CD8-positive, alpha-beta T cell (primary cell): ENCODE measurements at regions of chr7 and their contacts with region 1.

Region 1: GRCh38 chr7:5557920-5558401 is 134.3 kb upstream of the TNRC18 start:
- DNase-seq: peak in 2 of 9 experiments; percentile 33 to 60
- ATAC-seq: no peak
- H3K4me3 ChIP-seq: peak overlapping the region; percentile 10 to 40
- H3K4me3 Mint-ChIP-seq: peak overlapping the region; percentile 84
- H3K27ac ChIP-seq: peak overlapping the region; percentile 19 to 74
- H3K27ac Mint-ChIP-seq: peak overlapping the region; percentile 93
- H3K4me1 ChIP-seq: peaks cover 47% of the 10 kb centered on the region
- H3K4me1 Mint-ChIP-seq: peaks cover 48% of the 10 kb centered on the region
- H3K27me3 ChIP-seq: peaks cover 0 to 9% of the 10 kb centered on the region in 2 experiments
- H3K27me3 Mint-ChIP-seq: peaks cover 2% of the 10 kb centered on the region
- CTCF ChIP-seq: no peak

Region 2: DNA sequence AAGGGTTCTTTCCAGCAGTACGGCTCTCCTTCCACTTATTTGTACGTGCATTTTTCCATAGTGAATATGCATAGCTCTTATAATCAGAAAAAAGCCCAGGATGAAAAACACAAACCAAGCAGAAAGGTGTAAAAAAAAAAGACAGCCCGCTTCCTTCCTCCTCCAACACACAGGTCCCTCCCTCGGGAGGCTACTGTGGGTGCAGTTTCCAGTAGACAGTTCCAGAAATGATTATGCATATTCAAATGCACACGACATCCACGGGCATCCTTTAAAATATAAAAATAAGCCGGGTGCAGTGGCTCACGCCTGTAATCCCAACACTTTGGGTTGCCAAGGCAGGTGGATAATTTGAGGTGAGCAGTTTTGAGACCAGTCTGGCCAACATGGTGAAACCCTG is 194.2 kb before region 1 on chr7:
- CTCF ChIA-PET with region 1: no interaction called
- POLR2A ChIA-PET with region 1: no interaction called
- intact Hi-C with region 1: loop called in 1 of 2 experiments (anchors 2 kb)
- DNase-seq: no peak
- ATAC-seq: no peak
- H3K4me3 ChIP-seq: no peak overlapping the region
- H3K4me3 Mint-ChIP-seq: no peak overlapping the region
- H3K27ac ChIP-seq: no peak overlapping the region
- H3K27ac Mint-ChIP-seq: no peak overlapping the region
- H3K4me1 ChIP-seq: no peaks in the 10 kb centered on the region
- H3K4me1 Mint-ChIP-seq: peaks cover 20% of the 10 kb centered on the region
- H3K27me3 ChIP-seq: no peaks in the 10 kb centered on the region
- H3K27me3 Mint-ChIP-seq: no peaks in the 10 kb centered on the region
- CTCF ChIP-seq: no peak

Region 3: GRCh38 chr7:5396999-5397663 is 160.8 kb before region 1 on chr7:
- CTCF ChIA-PET with region 1: interaction called, 3 read pairs
- POLR2A ChIA-PET with region 1: no interaction called
- intact Hi-C with region 1: loop called in 1 of 2 experiments (anchors 2 kb)
- DNase-seq: peak; percentile 81 to 99 (median 92)
- ATAC-seq: peak; percentile 91
- H3K4me3 ChIP-seq: peak overlapping the region; percentile 83 to 96
- H3K4me3 Mint-ChIP-seq: peak overlapping the region; percentile 82
- H3K27ac ChIP-seq: peak overlapping the region; percentile 84 to 95
- H3K27ac Mint-ChIP-seq: peak overlapping the region; percentile 81
- H3K4me1 ChIP-seq: peaks cover 31% of the 10 kb centered on the region
- H3K4me1 Mint-ChIP-seq: peaks cover 26% of the 10 kb centered on the region
- H3K27me3 ChIP-seq: no peaks in the 10 kb centered on the region
- H3K27me3 Mint-ChIP-seq: no peaks in the 10 kb centered on the region
- CTCF ChIP-seq: no peak

Region 4: DNA sequence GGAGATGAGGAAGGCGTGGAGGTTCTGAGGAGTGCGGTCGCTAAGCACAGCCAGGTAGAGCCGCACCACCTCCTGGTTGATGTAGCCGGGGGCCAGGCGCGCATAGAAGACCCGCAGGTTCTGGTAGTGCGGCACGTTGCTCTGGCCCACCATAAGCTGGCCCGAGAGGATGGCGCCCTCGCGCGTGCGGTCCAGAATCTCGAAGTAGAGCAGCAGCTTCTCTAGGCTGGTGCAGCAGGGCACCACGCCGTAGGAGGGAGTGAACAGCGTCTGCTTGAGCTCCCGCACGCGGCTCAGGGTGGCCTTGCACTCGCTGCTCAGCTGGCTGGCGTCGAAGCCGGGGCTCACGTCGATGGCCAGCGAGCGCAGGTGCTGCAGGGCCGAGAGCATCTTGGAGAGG is 56.5 kb before region 1 on chr7:
- CTCF ChIA-PET with region 1: interaction called, 12 read pairs
- POLR2A ChIA-PET with region 1: interaction called, 5 read pairs
- intact Hi-C with region 1: no loop called
- DNase-seq: no peak
- ATAC-seq: no peak
- H3K4me3 ChIP-seq: no peak overlapping the region
- H3K4me3 Mint-ChIP-seq: no peak overlapping the region
- H3K27ac ChIP-seq: no peak overlapping the region
- H3K27ac Mint-ChIP-seq: no peak overlapping the region
- H3K4me1 ChIP-seq: peaks cover 11% of the 10 kb centered on the region
- H3K4me1 Mint-ChIP-seq: peaks cover 10% of the 10 kb centered on the region
- H3K27me3 ChIP-seq: no peaks in the 10 kb centered on the region
- H3K27me3 Mint-ChIP-seq: no peaks in the 10 kb centered on the region
- CTCF ChIP-seq: no peak

Region 5: DNA sequence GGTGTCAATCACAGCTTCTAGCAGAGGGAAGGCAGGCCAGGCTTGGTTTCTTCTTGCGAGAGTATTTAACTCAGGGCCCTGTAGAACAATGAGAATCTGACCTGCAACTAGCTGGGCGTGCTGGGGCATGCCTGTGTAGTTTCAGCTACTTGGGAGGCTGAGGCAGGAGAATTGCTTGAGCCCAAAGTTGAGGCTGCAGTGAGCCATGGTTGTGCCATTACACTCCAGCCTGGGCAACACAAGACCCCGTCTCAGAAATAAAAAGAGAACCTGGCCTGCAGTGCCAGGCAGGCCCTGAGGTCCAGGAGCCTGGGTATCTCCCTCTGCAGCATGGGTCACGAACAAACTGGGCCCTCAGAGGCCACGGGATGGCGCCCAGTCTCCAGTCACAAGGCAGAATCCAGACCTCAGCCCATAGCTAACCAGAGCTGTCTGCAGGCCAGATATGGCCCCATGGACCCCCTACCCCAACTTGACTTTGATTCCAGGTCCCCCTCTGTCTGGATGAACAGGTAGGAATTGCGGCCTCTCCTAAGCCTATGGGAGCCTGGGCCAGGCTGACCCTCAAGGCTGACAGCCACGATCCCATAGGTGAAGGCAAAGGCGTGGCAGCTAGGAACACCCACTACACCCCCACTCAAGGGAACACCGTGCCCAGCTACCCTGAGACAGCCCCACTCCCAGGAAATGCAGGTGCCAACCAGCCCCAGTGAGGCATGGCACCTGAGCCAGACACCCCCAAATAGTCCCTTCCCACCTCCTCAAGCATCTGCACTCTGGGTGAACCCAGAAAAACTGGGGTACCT is 31.7 kb before region 1 on chr7:
- CTCF ChIA-PET with region 1: interaction called, 32 read pairs
- POLR2A ChIA-PET with region 1: no interaction called
- intact Hi-C with region 1: no loop called
- DNase-seq: peak in 5 of 9 experiments; percentile 20 to 68 (median 38)
- ATAC-seq: no peak
- H3K4me3 ChIP-seq: peak overlapping the region; percentile 69 to 87
- H3K4me3 Mint-ChIP-seq: peak overlapping the region; percentile 98
- H3K27ac ChIP-seq: peak overlapping the region in 1 of 2 experiments; percentile 78
- H3K27ac Mint-ChIP-seq: peak overlapping the region; percentile 96
- H3K4me1 ChIP-seq: peaks cover 18% of the 10 kb centered on the region
- H3K4me1 Mint-ChIP-seq: peaks cover 37% of the 10 kb centered on the region
- H3K27me3 ChIP-seq: no peaks in the 10 kb centered on the region
- H3K27me3 Mint-ChIP-seq: no peaks in the 10 kb centered on the region
- CTCF ChIP-seq: no peak

Region 6: DNA sequence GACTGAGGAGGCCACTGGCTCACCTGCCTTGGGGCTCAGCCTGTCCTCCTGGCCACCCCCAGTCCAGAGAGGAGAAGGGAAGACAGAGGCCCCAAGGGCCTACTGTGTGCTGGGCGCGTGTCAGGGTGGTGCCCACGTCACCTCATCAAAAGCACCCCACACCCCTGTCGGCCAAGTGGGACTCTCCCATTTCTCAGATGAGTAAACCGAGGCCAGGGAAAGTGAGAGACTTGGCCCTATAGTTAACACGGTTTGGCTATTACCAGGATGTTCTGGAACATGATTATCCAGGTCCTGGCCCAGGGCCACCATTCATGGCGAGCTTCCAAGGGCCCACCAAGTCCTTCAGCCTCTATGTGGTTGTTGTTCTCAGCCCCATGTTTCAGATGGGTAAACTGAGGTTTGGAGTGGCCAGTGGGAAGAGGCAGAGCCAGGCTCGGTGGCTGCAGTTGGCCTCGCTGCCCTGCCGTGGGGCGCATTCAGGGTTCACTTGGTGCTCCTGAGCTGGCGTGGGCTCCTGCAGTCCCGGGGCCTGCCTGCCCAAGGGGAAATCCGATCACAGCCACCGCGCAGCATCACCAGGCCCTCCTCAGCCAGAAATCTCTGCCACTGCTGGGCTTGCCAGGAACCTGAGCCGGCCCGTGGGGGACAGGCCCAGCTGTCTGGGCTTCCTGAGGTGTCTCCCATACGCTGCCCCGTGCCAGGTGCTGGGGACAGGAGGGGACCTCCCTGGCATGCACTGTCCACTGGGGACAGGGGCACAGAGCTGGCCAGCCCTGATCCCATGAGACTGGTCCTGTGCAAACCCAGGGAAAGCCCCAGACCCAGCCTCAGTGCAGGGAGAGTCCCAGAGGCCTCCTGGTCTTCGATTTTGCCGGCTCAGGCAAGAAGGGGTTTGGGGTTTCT is 16.6 kb before region 1 on chr7:
- CTCF ChIA-PET with region 1: interaction called, 16 read pairs
- POLR2A ChIA-PET with region 1: no interaction called
- intact Hi-C with region 1: no loop called
- DNase-seq: no peak
- ATAC-seq: no peak
- H3K4me3 ChIP-seq: no peak overlapping the region
- H3K4me3 Mint-ChIP-seq: no peak overlapping the region
- H3K27ac ChIP-seq: no peak overlapping the region
- H3K27ac Mint-ChIP-seq: no peak overlapping the region
- H3K4me1 ChIP-seq: peaks cover 12% of the 10 kb centered on the region
- H3K4me1 Mint-ChIP-seq: peaks cover 8% of the 10 kb centered on the region
- H3K27me3 ChIP-seq: no peaks in the 10 kb centered on the region
- H3K27me3 Mint-ChIP-seq: no peaks in the 10 kb centered on the region
- CTCF ChIP-seq: no peak

Region 7: DNA sequence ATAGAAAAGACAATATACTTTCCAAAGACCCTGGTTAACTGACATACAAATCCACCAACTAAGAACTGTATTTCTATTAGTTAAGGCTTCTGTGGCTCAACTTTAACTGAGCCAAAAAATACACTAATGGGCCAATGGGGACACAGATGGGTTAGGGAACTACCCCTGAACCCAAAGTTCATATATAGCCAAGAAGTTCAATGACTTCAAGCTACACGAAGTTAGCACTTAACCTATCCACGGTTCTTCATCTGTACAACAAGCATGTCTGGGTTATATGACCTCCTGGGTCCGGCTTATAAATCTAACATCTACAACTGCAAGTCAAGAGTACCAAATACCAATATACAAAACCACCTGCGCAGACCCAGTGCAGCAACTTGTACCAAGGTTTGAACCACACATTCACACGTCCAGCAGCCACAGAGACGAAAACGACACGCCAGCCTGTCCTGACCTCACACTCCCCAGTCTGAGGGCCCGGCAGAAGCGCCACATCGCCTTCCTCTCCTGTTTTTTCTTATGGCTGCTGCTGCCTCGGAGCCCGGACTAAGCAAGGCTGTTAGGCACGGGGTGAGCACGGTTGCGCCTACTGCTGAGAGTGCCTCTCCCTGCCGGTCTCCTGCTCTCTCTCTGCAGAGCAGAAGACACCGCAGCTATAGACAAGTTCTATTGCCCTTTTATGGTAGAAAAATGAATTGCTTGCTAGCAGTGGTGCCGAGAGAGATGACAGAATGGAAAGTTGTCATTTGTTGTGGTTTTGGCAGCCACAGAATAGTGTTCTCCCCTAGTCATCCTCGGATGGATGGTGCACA is 137.2 kb after region 1 on chr7:
- CTCF ChIA-PET with region 1: interaction called, 19 read pairs
- POLR2A ChIA-PET with region 1: interaction called, 5 read pairs
- intact Hi-C with region 1: no loop called
- DNase-seq: peak; percentile 18 to 88 (median 72)
- ATAC-seq: peak; percentile 75
- H3K4me3 ChIP-seq: peak overlapping the region; percentile 49 to 64
- H3K4me3 Mint-ChIP-seq: peak overlapping the region; percentile 92
- H3K27ac ChIP-seq: peak overlapping the region; percentile 54 to 65
- H3K27ac Mint-ChIP-seq: peak overlapping the region; percentile 96
- H3K4me1 ChIP-seq: peaks cover 97% of the 10 kb centered on the region
- H3K4me1 Mint-ChIP-seq: peaks cover 100% of the 10 kb centered on the region
- H3K27me3 ChIP-seq: no peaks in the 10 kb centered on the region
- H3K27me3 Mint-ChIP-seq: no peaks in the 10 kb centered on the region
- CTCF ChIP-seq: no peak

Region 8: DNA sequence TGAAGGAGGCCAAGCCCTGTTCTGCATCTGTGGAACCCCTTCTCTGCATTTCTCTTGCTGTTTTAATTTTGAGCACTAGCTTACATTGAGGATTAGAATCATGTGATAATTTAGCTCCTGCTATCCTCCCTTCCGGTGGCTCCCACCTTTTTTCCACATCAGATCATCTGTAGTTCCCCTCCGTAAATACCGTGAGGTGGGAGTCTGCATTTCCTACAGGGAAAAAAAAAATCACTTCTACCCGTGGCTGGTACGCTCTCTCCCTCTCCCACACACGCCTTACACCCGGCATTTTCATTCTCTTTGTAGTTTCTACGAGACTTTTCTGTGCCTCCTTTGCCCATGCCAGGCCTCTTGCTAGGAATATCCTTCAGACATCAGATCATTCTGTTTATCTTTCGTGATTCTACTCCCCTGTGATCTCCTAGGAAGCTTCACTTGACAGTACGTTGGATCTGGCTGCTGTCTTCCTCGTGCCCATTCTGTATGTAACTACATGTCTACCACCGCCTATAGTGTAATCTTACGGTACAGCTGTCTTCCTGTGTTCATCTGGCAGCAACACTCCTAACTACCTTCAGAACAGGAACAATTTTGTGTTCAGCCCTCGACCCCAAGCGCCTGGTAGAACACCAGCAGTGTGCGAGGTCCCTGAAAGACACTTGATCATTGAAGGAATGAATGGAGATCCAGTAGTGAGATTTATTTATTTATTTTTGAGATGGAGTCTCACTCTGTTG is 281.0 kb after region 1 on chr7:
- CTCF ChIA-PET with region 1: no interaction called
- POLR2A ChIA-PET with region 1: no interaction called
- intact Hi-C with region 1: no loop called
- DNase-seq: no peak
- ATAC-seq: no peak
- H3K4me3 ChIP-seq: no peak overlapping the region
- H3K4me3 Mint-ChIP-seq: peak overlapping the region; percentile 23
- H3K27ac ChIP-seq: no peak overlapping the region
- H3K27ac Mint-ChIP-seq: no peak overlapping the region
- H3K4me1 ChIP-seq: peaks cover 28% of the 10 kb centered on the region
- H3K4me1 Mint-ChIP-seq: peaks cover 37% of the 10 kb centered on the region
- H3K27me3 ChIP-seq: no peaks in the 10 kb centered on the region
- H3K27me3 Mint-ChIP-seq: no peaks in the 10 kb centered on the region
- CTCF ChIP-seq: no peak